Activated CD4-positive, alpha-beta T cell treated with anti-CD3 and anti-CD28 coated beads, Interleukin-2, amount 10 ng/mL, durations not matched to agents 24 days and 14 days (primary cell): ENCODE measurements at regions of chr10 and their contacts with region 1.

Region 1: DNA sequence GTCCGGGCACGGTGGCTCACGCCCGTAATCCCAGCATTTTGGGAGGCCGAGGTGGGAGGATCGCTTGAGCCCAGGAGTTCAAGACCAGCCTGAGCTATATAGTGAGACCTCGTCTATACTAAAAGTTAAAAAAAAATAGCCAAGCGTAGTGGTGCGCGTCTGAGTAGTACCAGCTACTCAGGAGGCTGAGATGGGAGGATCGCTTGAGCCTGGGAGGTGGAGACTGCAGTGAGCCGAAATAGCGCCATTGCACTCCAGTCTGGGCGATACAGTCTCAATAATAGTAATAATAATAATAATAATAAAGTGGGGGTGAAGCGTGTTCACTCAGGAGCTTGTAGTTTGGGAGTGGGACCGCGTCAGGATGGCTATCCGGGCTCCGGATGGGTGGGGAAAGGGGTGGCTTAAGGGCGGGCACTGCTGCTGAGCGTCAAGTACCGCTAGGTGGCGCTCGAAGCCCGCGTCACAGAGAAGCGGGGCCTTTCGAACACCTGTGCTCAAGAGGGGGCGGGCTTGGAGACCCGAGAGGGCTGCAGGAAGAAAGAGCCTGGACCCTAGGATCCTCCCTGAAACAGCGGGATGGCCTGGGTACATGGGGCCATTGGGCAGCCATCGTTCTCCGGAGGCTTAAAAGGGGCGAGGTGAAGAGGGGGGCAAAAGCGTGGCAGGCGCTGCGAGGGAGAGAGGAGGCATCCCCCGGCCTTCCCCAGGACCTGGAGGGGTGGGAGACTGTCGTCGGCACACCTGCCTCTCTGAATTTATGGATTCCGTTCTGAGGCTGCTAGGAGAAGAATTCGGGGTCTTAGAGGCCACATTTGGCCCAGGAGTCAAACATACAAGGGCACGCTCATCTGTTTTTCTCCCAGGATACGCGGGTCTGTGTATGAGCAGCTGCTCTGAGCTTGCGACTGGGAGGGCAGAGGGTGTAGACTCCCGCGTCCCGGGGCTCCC is 14.5 kb downstream of the LBX1 start:
- DNase-seq: peak; percentile 90
- H3K4me3 Mint-ChIP-seq: peak overlapping the region; percentile 59
- H3K27ac Mint-ChIP-seq: peak overlapping the region; percentile 69
- H3K4me1 Mint-ChIP-seq: peaks cover 18% of the 10 kb centered on the region
- H3K27me3 Mint-ChIP-seq: peaks cover 79% of the 10 kb centered on the region

Region 2: DNA sequence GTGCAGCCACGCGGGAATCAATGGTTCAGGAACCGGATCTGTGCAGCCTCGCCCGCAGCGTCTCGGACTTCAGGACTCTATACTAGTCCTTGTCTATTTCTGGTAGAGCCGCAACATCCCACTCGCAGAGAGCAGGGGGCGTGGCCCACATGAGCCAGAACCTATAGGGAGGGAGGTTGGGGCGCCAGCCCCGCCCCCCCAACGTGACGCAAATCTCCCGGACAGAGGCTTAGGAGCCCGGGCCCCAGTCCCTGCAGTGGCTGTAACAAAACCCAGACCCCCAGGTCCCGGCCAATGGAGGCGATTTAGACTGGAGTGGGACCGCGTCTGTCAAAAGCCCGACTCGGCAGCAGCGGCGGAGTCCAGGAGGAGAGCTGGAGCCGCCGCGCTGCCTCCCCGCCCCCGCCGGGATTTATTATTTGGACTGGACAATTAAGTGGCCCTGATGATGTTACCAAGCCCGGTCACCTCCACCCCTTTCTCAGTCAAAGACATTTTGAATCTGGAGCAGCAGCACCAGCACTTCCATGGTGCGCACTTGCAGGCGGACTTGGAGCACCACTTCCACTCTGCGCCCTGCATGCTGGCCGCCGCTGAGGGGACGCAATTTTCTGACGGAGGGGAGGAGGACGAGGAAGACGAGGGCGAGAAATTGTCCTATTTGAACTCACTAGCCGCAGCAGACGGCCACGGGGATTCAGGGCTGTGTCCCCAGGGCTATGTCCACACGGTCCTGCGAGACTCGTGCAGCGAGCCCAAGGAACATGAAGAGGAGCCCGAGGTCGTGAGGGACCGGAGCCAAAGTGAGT is 1681.8 kb before region 1 on chr10 and contains the start of gene NKX2-3:
- intact Hi-C with region 1: loop called (anchors 5 kb)
- DNase-seq: peak; percentile 71
- H3K4me3 Mint-ChIP-seq: peak within 1 kb of the TSS; percentile 21
- H3K27ac Mint-ChIP-seq: no peak within 1 kb of the TSS
- H3K4me1 Mint-ChIP-seq: peaks cover 24% of the 10 kb centered on the region
- H3K27me3 Mint-ChIP-seq: peaks cover 89% of the 10 kb centered on the region
- total RNA-seq, gene NKX2-3: not detected in 2 replicates

Region 3: GRCh38 chr10:101141616-101142532 is 72.8 kb before region 1 on chr10:
- intact Hi-C with region 1: loop called (anchors 2 kb)
- DNase-seq: peak; percentile 94
- H3K4me3 Mint-ChIP-seq: no peak overlapping the region
- H3K27ac Mint-ChIP-seq: no peak overlapping the region
- H3K4me1 Mint-ChIP-seq: peaks cover 17% of the 10 kb centered on the region
- H3K27me3 Mint-ChIP-seq: peaks cover 89% of the 10 kb centered on the region

Region 4: GRCh38 chr10:101161494-101162299 is 53.0 kb before region 1 on chr10:
- intact Hi-C with region 1: no loop called
- DNase-seq: peak; percentile 90
- H3K4me3 Mint-ChIP-seq: no peak overlapping the region
- H3K27ac Mint-ChIP-seq: no peak overlapping the region
- H3K4me1 Mint-ChIP-seq: peaks cover 14% of the 10 kb centered on the region
- H3K27me3 Mint-ChIP-seq: peaks cover 62% of the 10 kb centered on the region

Region 5: DNA sequence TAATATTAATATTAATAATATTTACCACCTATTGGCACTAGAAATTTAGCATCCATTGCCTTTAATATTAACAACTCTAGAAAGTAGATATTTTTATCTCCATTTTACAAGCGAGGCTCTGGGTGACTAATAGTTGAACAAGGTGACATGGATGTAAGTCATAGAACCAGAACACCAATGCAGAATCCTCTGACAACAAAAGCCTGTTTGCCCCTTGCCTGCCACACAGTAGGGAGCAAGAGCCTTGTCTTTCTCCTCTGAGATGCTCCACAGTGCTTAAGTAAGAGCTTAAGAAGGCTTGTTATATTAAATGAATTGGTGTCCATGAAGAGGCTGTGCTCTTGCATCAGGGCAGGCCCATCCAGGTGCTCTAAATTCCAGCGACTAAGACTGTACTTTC is 65.8 kb after region 1 on chr10:
- intact Hi-C with region 1: no loop called
- DNase-seq: no peak
- H3K4me3 Mint-ChIP-seq: no peak overlapping the region
- H3K27ac Mint-ChIP-seq: no peak overlapping the region
- H3K4me1 Mint-ChIP-seq: peaks cover 2% of the 10 kb centered on the region
- H3K27me3 Mint-ChIP-seq: peaks cover 42% of the 10 kb centered on the region

Region 6: GRCh38 chr10:101291331-101292193 is 76.8 kb after region 1 on chr10:
- intact Hi-C with region 1: loop called (anchors 2 kb)
- DNase-seq: peak; percentile 67
- H3K4me3 Mint-ChIP-seq: peak overlapping the region; percentile 79
- H3K27ac Mint-ChIP-seq: no peak overlapping the region
- H3K4me1 Mint-ChIP-seq: peaks cover 3% of the 10 kb centered on the region
- H3K27me3 Mint-ChIP-seq: peaks cover 70% of the 10 kb centered on the region

Region 7: GRCh38 chr10:101569838-101570766 is 355.4 kb after region 1 on chr10:
- intact Hi-C with region 1: loop called (anchors 1 kb)
- DNase-seq: peak; percentile 93
- H3K4me3 Mint-ChIP-seq: peak overlapping the region; percentile 79
- H3K27ac Mint-ChIP-seq: peak overlapping the region; percentile 56
- H3K4me1 Mint-ChIP-seq: peaks cover 17% of the 10 kb centered on the region
- H3K27me3 Mint-ChIP-seq: peaks cover 43% of the 10 kb centered on the region